K562 (cell line): ENCODE measurements at regions of chr4 and their contacts with region 1.

Region 1: DNA sequence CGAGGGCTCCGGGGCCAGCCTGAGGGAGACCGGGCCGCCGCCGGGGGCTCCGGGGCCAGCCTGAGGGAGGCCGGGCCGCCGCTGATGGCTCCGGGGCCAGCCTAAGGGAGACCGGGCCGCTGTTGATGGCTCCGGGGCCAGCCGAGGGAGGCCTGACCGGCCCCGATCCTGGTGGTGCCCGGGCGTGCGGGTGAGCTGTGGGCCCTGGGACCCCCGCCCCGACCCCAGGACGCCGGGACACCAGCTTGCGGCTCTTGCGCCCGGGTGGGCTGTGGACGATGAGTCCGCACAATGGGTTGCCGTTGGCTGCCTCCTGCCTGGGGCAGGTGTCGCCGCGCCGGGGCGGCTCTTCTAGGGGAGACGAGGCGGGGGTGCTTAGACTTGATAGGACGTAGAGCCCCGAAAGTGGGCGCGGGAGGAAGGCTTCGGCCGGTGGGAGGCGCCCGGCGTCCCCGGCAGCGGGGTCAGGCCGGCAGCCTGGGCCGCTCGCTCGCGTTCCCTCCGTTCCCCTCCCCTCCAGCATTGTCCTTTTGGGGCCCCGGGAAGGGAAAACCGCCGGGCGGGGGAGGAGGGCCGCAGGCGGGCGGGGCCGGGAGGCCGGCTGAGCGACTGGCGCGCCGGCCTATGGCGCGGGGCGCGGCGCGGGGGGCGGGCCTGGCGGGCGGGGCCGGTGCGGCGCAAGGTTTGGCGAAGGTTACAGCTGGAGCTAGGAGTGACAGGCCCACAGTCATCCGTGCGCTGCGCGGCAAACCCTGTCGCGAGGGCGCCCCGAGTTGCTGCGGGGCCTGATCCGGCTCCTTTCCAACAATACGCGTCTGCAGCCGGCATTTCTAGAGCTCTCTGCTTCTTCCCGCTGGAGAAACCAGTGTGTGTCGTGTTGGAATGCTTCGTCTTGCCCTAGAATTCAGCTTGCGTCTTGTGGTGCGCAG is 790 bp downstream of the KIAA0232 start:
- DNase-seq: peak; percentile 94 to 97 (median 96)
- ATAC-seq: peak; percentile 86
- H3K4me3 ChIP-seq: peak overlapping the region; percentile 95
- H3K27ac ChIP-seq: peak overlapping the region; percentile 97
- H3K4me1 ChIP-seq: peaks cover 42 to 50% of the 10 kb centered on the region in 2 experiments
- H3K27me3 ChIP-seq: no peaks in the 10 kb centered on the region
- CTCF ChIP-seq: peak; percentile 38 to 60 (median 55); a peak in 4 of 6 replicates
- EP300 ChIP-seq: 0 out of 2 replicates have a peak, but pooled peaks have one; percentile 10
- POLR2A ChIP-seq: peak; percentile 79
- RAD21 ChIP-seq: peak; percentile 49 to 64

Region 2: GRCh38 chr4:6732441-6733357 is 50.6 kb before region 1 on chr4:
- CTCF ChIA-PET with region 1: no interaction called
- POLR2A ChIA-PET with region 1: interaction called, 9 read pairs
- in situ Hi-C with region 1: no loop called
- intact Hi-C with region 1: loop called (anchors 2 kb)
- DNase-seq: peak; percentile 86 to 95 (median 89)
- ATAC-seq: peak; percentile 92
- H3K4me3 ChIP-seq: no peak overlapping the region
- H3K27ac ChIP-seq: peak overlapping the region; percentile 93
- H3K4me1 ChIP-seq: peaks cover 55 to 58% of the 10 kb centered on the region in 2 experiments
- H3K27me3 ChIP-seq: no peaks in the 10 kb centered on the region
- CTCF ChIP-seq: no peak
- EP300 ChIP-seq: peak; percentile 88
- POLR2A ChIP-seq: peak; percentile 80
- RAD21 ChIP-seq: peak in 1 of 2 experiments; percentile 39; a peak in 2 of 4 replicates

Region 3: DNA sequence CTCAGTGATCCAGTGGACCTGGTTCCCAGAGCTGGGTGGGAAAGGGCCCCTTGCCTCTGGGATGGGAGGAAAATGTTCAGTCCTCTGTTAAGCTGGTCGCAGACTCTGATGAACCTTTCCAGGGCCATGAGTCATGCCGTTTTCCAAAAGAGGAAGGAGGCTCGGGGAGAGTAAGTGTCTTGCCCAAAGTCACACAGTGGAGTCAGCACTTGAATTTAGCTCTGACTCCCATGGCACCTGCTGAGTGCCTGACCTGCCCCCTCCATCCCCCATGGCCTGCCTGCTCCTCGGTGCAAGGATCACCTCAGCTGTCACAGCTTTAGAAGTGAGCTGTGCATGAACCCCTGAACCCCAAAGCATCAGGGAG is 14.8 kb before region 1 on chr4:
- CTCF ChIA-PET with region 1: no interaction called
- POLR2A ChIA-PET with region 1: interaction called, 30 read pairs
- in situ Hi-C with region 1: no loop called
- intact Hi-C with region 1: no loop called
- DNase-seq: peak in 1 of 4 experiments; percentile 50
- ATAC-seq: peak; percentile 57
- H3K4me3 ChIP-seq: no peak overlapping the region
- H3K27ac ChIP-seq: no peak overlapping the region; the same call in 2 of the 3 replicates
- H3K4me1 ChIP-seq: peaks cover 14 to 22% of the 10 kb centered on the region in 2 experiments
- H3K27me3 ChIP-seq: 0 out of 5 replicates have a peak, but pooled peaks cover 0 to 8% of the 10 kb centered on the region in 2 experiments
- CTCF ChIP-seq: no peak
- EP300 ChIP-seq: no peak
- POLR2A ChIP-seq: no peak
- RAD21 ChIP-seq: no peak

Region 4: GRCh38 chr4:6794189-6794588 is 10.9 kb after region 1 on chr4:
- CTCF ChIA-PET with region 1: no interaction called
- POLR2A ChIA-PET with region 1: interaction called, 46 read pairs
- in situ Hi-C with region 1: no loop called
- intact Hi-C with region 1: no loop called
- DNase-seq: no peak
- ATAC-seq: peak; percentile 19; the same call in 2 of the 3 replicates
- H3K4me3 ChIP-seq: no peak overlapping the region
- H3K27ac ChIP-seq: no peak overlapping the region; the same call in 2 of the 3 replicates
- H3K4me1 ChIP-seq: peaks cover 0 to 9% of the 10 kb centered on the region in 2 experiments; a peak in 2 of 5 replicates
- H3K27me3 ChIP-seq: no peaks in the 10 kb centered on the region
- CTCF ChIP-seq: no peak
- EP300 ChIP-seq: no peak
- POLR2A ChIP-seq: no peak
- RAD21 ChIP-seq: no peak

Region 5: DNA sequence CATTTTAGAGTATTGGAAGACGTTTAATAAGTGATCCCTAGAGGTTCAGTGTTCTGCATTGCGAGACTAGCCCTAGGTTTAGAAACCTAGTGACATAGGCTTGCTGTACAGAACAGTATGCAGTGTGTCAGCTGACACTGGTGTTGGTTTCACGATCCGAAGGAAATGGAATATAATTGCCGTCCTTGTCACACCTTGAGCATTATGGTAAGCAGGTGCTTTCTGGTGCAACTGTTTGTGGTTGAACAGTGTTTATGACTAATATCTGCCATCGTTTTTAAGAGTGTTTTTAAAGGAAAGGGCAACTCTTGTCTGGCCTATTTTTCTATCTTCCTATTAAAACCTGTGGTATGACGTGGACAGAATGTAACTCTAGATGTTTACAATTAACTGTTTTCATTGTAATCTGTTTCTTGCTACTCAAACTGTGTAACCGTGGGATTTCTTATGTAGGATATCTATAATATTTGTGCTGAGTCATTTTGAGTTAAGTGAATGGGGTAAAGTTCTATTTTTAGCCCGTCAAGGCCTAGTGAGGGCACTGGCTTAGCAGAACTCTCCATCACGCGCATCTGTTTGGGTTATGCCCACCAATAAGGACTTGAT is 72.5 kb after region 1 on chr4:
- CTCF ChIA-PET with region 1: no interaction called
- POLR2A ChIA-PET with region 1: no interaction called
- in situ Hi-C with region 1: no loop called
- intact Hi-C with region 1: loop called (anchors 5 kb)
- DNase-seq: peak in 2 of 4 experiments; percentile 60
- ATAC-seq: peak; percentile 74
- H3K4me3 ChIP-seq: no peak overlapping the region
- H3K27ac ChIP-seq: peak overlapping the region; percentile 77
- H3K4me1 ChIP-seq: peaks cover 0 to 13% of the 10 kb centered on the region in 2 experiments; a peak in 3 of 5 replicates
- H3K27me3 ChIP-seq: no peaks in the 10 kb centered on the region
- CTCF ChIP-seq: no peak
- EP300 ChIP-seq: peak; percentile 39; the same call in 1 of the 2 replicates
- POLR2A ChIP-seq: no peak
- RAD21 ChIP-seq: no peak

Region 6: DNA sequence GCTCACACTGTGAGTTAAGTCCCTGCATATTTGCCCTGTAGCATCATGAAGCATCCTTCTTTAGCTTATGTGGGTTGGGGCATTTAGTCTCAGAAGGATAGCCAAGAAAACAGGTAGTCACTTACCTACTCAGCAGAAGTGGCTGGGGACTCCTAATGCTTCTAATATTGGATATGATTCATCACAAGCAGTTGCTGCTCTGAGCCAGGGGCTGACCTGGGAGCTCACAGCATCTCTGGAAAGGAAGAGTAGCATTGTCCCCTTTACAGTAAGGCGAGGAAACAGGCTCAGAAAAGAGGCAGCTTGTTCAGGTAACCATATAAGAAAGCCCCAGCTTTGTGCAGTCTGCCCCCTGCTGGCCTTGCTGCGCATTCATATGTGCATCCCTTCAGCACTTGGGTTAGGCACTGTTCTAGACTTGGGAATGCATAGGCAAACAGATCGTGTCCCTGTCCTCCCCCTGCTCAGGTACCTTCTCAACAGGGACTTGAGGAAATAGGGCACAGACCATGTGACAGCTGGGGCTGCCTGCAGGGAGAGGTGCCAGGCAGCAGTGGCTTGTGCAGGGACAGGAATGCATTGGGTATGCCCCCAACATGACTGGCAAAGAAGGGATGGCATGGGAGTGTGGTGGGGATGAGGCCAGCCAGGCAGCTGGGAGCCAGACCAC is 90.6 kb after region 1 on chr4:
- CTCF ChIA-PET with region 1: interaction called, 4 read pairs
- POLR2A ChIA-PET with region 1: interaction called, 7 read pairs
- in situ Hi-C with region 1: no loop called
- intact Hi-C with region 1: loop called (anchors 1 kb)
- DNase-seq: peak; percentile 58 to 80 (median 68)
- ATAC-seq: peak; percentile 95
- H3K4me3 ChIP-seq: no peak overlapping the region
- H3K27ac ChIP-seq: no peak overlapping the region
- H3K4me1 ChIP-seq: no peaks in the 10 kb centered on the region; a peak in 1 of 5 replicates
- H3K27me3 ChIP-seq: no peaks in the 10 kb centered on the region
- CTCF ChIP-seq: peak; percentile 81 to 90 (median 89)
- EP300 ChIP-seq: no peak
- POLR2A ChIP-seq: no peak
- RAD21 ChIP-seq: peak; percentile 82 to 92

Region 7: DNA sequence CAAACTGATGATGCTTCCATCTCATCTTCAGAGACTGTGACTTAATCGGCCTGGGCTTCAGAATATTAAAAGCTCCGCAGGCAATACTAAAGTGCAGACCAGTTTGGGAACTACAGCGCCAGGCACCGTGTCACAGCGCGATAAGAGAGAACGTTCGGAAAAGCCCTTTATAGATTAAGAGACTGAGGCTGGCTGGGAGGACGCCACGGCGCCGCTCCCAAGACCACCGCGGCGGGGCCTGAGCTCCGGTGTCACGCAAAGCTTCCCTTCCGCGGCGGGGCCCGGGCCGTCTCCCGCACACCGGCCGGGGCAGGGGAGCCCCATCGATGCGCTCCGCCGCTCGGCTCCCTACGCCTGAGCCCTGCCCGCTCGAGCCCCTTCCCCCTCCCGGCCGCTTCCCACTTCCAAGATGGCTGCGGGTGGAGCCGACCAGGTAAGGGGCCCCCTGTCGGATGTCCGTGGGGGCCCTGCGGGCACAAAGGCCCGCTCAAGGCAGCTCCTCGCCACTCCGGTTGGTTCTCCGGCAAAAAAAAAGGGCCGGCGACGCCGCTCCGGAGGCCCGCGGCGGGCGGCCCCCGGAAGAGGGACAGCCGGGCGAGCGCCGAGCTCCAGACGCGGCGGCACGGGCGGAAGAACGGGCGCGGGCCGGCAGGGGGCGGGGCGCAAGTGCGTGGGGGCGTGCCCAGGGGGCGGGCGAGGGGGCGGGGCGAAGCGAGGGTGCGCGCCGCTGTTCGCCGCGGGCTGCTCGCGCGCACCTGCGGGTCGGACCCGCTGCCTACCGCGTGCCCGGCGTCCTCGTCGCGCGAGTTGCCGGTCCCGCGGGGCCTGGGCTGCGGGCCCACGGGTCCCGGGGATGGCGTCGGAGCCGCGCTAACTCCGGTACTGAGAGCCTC is 126.0 kb after region 1 on chr4 and contains the start of gene TBC1D14:
- CTCF ChIA-PET with region 1: no interaction called
- POLR2A ChIA-PET with region 1: interaction called, 15 read pairs
- in situ Hi-C with region 1: no loop called
- intact Hi-C with region 1: no loop called
- DNase-seq: peak; percentile 90 to 96 (median 94)
- ATAC-seq: peak; percentile 86
- H3K4me3 ChIP-seq: peak within 1 kb of the TSS; percentile 94
- H3K27ac ChIP-seq: peak within 1 kb of the TSS; percentile 98
- H3K4me1 ChIP-seq: peaks cover 48 to 58% of the 10 kb centered on the region in 2 experiments
- H3K27me3 ChIP-seq: no peaks in the 10 kb centered on the region
- CTCF ChIP-seq: 0 out of 6 replicates have a peak, but pooled peaks of 2 of the 3 experiments have one; percentile 19 to 23
- EP300 ChIP-seq: 0 out of 2 replicates have a peak, but pooled peaks have one; percentile 27
- POLR2A ChIP-seq: peak; percentile 78
- RAD21 ChIP-seq: no peak
- polyA plus RNA-seq, gene TBC1D14: 2.1 to 2.7 TPM